ENCODE measurements at regions of chr17 and their contacts with region 1.

Region 1: GRCh38 chr17:7045909-7046724 is 2.2 kb upstream of the SLC16A11 start:
- DNase-seq: peak; percentile 76 to 91
- ATAC-seq: peak; percentile 51 to 69
- H3K4me3 ChIP-seq: no peak overlapping the region
- H3K27ac ChIP-seq: peak overlapping the region in 1 of 2 experiments; percentile 12; a peak in 1 of 6 replicates
- H3K4me1 ChIP-seq: peaks cover 19% of the 10 kb centered on the region
- CTCF ChIP-seq: peak; percentile 99
- EP300 ChIP-seq: no peak
- POLR2A ChIP-seq: no peak
- RAD21 ChIP-seq: peak; percentile 98 to 99

Region 2: DNA sequence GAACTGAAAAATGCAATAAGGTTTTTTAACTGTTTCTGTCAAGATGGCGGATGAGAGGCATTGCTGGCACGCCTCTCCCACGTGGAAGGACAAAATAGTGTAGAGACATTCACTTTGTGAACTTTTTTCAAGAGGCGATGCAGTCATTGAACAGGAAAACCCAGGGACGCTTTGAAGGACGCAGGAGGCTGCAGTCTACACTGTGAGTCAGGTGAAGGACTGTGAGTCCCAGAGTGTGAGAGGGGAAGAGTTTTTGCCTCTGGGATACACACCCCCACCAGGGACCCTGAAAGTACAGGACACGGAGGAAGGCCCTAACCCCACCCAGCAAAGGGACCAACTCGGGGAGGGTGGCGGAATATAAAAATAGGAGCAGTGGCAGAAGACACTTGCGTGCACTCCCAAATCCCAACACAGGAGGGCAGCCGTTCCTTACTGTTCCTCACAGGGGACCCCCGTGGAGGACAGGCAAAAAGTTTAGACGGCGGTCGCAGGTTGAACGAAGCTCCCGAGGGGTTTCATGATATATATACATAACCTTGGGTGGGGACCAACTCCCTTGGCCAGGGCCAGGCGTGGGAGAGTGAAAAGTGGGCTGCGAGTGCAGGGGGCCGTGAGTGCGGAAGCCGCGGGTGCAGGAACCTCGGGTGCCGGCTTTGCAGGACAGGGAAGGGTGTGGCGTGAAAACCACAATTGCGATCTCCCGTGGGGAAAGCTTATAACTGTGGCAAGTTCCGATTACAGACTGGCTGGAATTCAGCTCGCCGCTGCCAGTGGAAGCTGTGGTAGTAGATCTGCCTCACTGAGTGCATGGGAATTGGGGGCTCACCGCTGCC is 132.3 kb before region 1 on chr17:
- CTCF ChIA-PET with region 1: interaction called, 13 read pairs
- POLR2A ChIA-PET with region 1: no interaction called
- DNase-seq: peak; percentile 57 to 74
- ATAC-seq: peak; percentile 70 to 82
- H3K4me3 ChIP-seq: peak overlapping the region; percentile 36; the same call in 2 of the 3 replicates
- H3K27ac ChIP-seq: peak overlapping the region; percentile 9 to 50; a peak in 3 of 6 replicates
- H3K4me1 ChIP-seq: peaks cover 5% of the 10 kb centered on the region; the same call in 2 of the 3 replicates
- CTCF ChIP-seq: peak; percentile 84
- EP300 ChIP-seq: no peak
- POLR2A ChIP-seq: no peak
- RAD21 ChIP-seq: peak; percentile 88 to 89

Region 3: DNA sequence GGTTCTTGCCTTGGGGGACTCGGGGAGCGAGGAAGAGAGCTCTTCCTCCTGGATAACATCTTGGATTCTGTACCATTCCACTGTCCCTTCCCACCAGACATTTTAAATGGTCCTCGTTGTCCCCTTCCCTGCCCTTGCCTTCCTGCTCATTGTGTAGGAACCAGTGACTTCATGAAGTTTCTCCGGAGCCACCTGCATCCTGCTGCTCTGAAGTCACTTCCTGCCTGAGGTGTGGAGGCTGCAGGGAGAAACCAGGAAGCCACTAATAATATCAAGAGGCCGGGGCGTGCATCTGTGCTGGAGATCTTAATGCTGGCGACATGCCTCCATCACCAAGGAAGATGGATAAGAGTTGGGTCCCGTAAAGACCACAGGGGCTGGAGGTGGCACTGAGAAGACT is 16.5 kb before region 1 on chr17:
- CTCF ChIA-PET with region 1: interaction called, 20 read pairs
- POLR2A ChIA-PET with region 1: no interaction called
- DNase-seq: no peak
- ATAC-seq: no peak
- H3K4me3 ChIP-seq: no peak overlapping the region
- H3K27ac ChIP-seq: no peak overlapping the region
- H3K4me1 ChIP-seq: no peaks in the 10 kb centered on the region; the same call in 2 of the 3 replicates
- CTCF ChIP-seq: no peak
- EP300 ChIP-seq: no peak
- POLR2A ChIP-seq: no peak
- RAD21 ChIP-seq: no peak

Region 4: DNA sequence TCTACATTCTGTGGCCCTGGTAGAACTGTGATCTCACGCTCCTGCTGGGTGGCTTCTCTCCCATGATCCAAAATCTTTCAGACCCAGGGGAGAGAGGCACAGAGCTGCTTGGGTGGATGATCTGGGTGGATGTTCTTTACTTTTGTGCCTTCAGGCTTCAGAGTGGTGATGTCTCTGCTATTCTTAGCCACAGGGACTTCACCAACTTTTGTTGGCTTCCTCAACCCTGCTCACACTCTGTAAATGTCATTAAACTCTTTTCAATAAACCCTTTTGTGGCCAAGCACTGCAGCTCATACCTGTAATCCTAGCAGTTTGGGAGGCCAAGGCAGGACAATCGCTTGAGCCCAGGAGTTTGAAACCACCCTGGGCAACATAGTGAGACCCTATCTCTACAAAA is 26.3 kb after region 1 on chr17:
- CTCF ChIA-PET with region 1: interaction called, 35 read pairs
- POLR2A ChIA-PET with region 1: no interaction called
- DNase-seq: no peak
- ATAC-seq: no peak
- H3K4me3 ChIP-seq: no peak overlapping the region
- H3K27ac ChIP-seq: no peak overlapping the region
- H3K4me1 ChIP-seq: no peaks in the 10 kb centered on the region
- CTCF ChIP-seq: no peak
- EP300 ChIP-seq: no peak
- POLR2A ChIP-seq: no peak
- RAD21 ChIP-seq: no peak

Region 5: DNA sequence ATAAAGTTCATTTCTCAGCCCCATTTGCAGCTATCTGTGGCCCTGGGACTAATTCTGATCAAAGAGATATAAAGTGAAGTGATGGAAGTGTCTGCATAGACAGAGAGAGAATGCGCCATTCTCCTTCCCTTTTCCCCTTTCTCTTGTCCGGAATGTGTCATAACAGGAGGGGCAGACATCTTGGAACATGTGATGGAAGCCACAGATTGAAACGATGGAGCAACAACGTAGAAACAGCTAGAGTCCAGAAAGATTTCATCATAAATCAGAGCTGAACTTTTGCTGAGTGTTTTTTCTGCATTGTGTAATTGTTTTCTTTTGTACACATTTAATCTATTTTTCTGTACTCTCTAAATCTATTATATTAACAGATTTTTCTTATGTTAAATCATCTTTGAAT is 121.7 kb after region 1 on chr17:
- CTCF ChIA-PET with region 1: interaction called, 177 read pairs
- POLR2A ChIA-PET with region 1: interaction called, 5 read pairs
- DNase-seq: no peak
- ATAC-seq: no peak; a peak in 1 of 6 replicates
- H3K4me3 ChIP-seq: no peak overlapping the region
- H3K27ac ChIP-seq: no peak overlapping the region
- H3K4me1 ChIP-seq: peaks cover 2% of the 10 kb centered on the region; the same call in 1 of the 3 replicates
- CTCF ChIP-seq: no peak
- EP300 ChIP-seq: no peak
- POLR2A ChIP-seq: no peak
- RAD21 ChIP-seq: no peak

Region 6: DNA sequence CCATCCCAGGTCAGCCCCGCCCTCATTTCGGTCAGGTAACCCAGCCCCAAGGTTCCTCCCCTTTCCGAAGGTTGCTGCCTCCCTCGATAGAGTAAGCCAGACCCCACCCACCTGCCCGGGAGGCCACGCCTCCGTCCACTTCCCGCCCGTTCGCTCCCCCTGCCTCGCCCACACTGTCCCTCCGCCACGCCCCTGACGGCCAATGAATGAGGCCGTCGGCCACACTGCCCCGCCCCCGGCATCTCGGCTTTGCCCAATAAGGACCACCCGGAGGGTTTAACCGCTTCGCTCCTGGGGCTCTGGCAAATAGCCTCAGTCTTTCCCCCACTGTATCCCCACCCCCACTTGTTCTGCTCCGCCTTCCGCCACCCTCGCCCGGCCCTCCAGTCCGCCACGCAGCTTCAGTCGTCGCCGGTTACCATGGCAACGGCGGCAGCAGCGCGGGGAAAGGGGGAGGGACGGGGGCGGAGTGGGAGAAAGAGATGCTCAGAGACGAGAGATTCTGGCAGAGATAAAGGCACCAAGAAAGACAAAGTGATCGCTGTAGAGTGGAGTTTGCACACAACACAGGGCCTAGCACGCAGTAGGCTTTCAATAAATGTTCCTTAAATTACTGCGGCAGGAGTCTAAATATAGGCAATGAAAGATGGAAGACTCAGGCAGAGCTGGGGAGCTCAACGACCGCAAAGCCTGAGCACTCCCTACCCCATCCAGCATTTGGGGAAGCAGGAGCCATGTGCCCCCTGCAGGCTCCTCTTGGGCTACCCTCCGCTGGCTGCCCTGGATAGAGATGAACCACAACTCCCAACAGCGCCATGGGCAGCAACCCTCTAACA is 168.4 kb after region 1 on chr17:
- CTCF ChIA-PET with region 1: interaction called, 24 read pairs
- POLR2A ChIA-PET with region 1: no interaction called
- DNase-seq: peak; percentile 99 to 100
- ATAC-seq: peak; percentile 75 to 89
- H3K4me3 ChIP-seq: peak overlapping the region; percentile 47
- H3K27ac ChIP-seq: peak overlapping the region; percentile 61 to 79
- H3K4me1 ChIP-seq: peaks cover 43% of the 10 kb centered on the region
- CTCF ChIP-seq: peak; percentile 53
- EP300 ChIP-seq: no peak
- POLR2A ChIP-seq: no peak
- RAD21 ChIP-seq: peak; percentile 34 to 42; a peak in 2 of 5 replicates

Region 7: DNA sequence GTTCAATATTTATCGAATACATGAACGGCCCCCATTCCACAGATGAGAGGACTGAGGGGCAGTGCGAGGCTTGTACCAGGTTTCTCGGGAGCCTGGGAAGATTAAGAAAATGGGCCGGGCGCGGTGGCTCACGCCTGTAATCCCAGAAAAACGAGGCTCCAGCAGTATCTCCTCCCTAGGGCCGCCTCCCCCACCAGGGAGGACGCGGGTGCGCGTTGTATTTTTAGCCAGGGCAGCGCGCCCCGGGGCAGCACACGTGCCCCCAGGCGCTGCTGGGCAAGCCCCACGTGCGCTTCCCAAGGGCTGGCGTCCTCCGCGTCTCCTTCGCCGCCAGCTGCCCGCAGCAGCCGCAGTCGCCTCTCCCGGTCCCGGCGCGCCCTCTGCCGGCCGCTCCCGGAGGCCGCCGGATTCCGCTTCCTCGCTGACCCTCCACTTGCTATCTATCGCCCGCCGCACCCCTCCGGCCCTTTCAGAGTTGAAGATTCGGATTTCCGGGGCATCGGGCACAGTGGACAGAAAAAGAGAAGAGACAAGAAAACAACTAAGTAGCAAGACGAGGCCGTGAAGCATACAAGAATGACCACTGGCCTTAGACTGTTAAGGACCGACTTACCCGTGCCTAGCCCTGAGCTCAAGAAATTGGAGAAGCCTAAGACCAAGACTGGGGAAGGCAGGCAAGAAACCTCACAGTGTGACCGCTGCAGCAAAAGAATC is 250.2 kb after region 1 on chr17:
- CTCF ChIA-PET with region 1: interaction called, 36 read pairs
- POLR2A ChIA-PET with region 1: interaction called, 3 read pairs
- DNase-seq: peak; percentile 86 to 89
- ATAC-seq: peak; percentile 81 to 87
- H3K4me3 ChIP-seq: no peak overlapping the region; the same call in 2 of the 3 replicates
- H3K27ac ChIP-seq: peak overlapping the region; percentile 39 to 82; a peak in 5 of 6 replicates
- H3K4me1 ChIP-seq: peaks cover 22% of the 10 kb centered on the region; the same call in 2 of the 3 replicates
- CTCF ChIP-seq: peak; percentile 99
- EP300 ChIP-seq: no peak
- POLR2A ChIP-seq: no peak
- RAD21 ChIP-seq: peak; percentile 94 to 99

Region 8: GRCh38 chr17:7435221-7435675 is 389.1 kb after region 1 on chr17 and contains the start of gene TMEM102:
- CTCF ChIA-PET with region 1: no interaction called
- POLR2A ChIA-PET with region 1: no interaction called
- DNase-seq: peak; percentile 99
- ATAC-seq: peak; percentile 75 to 87
- H3K4me3 ChIP-seq: peak within 1 kb of the TSS; percentile 55
- H3K27ac ChIP-seq: peak within 1 kb of the TSS; percentile 62 to 85
- H3K4me1 ChIP-seq: peaks cover 23% of the 10 kb centered on the region
- CTCF ChIP-seq: no peak
- EP300 ChIP-seq: no peak
- POLR2A ChIP-seq: peak; percentile 16
- RAD21 ChIP-seq: no peak
- polyA plus RNA-seq, gene TMEM102: 4.4 and 4.9 TPM in 2 replicates